Activated naive CD4-positive, alpha-beta T cell treated with anti-CD3 and anti-CD28 coated beads for 36 hours (primary cell): ENCODE measurements at regions of chr3 and their contacts with region 1.

Region 1: GRCh38 chr3:100260685-100261484 is at the start of gene TBC1D23:
- DNase-seq: peak; percentile 98
- H3K4me3 Mint-ChIP-seq: peak within 1 kb of the TSS; percentile 86
- H3K27ac Mint-ChIP-seq: peak within 1 kb of the TSS; percentile 89
- H3K4me1 Mint-ChIP-seq: peaks cover 59% of the 10 kb centered on the region
- H3K27me3 Mint-ChIP-seq: no peaks in the 10 kb centered on the region
- total RNA-seq, gene TBC1D23: 14.1 to 15.8 TPM

Region 2: GRCh38 chr3:99817437-99818240 is 443.2 kb before region 1 on chr3 and contains the start of gene CMSS1:
- CTCF ChIA-PET with region 1: interaction called, 3 read pairs
- intact Hi-C with region 1: loop called (anchors 1 kb)
- DNase-seq: peak; percentile 95
- H3K4me3 Mint-ChIP-seq: peak within 1 kb of the TSS; percentile 98
- H3K27ac Mint-ChIP-seq: peak within 1 kb of the TSS; percentile 98
- H3K4me1 Mint-ChIP-seq: peaks cover 39% of the 10 kb centered on the region
- H3K27me3 Mint-ChIP-seq: no peaks in the 10 kb centered on the region
- total RNA-seq, gene CMSS1: 95.8 to 106 TPM

Region 3: DNA sequence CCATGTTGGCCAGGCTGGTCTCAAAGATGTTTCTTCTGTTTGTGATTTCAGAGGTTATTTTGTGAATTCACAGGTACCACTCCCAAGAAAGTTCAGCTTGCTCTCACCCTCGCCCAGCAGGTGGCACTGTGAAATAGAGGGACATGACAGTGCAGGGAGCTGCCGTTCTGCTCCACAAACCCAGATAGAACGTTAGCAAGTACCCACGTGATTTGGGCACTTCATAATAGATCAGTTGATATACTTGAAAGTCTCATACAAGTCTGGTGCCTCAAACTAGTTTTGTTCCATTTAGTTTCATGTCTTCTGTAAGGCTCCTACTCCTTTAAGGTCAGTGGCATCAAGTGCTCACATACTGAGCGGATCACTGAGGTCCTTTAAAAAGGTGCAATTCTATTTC is 192.1 kb before region 1 on chr3:
- CTCF ChIA-PET with region 1: interaction called, 11 read pairs
- intact Hi-C with region 1: no loop called
- DNase-seq: peak; percentile 90
- H3K4me3 Mint-ChIP-seq: no peak overlapping the region
- H3K27ac Mint-ChIP-seq: no peak overlapping the region
- H3K4me1 Mint-ChIP-seq: peaks cover 30% of the 10 kb centered on the region
- H3K27me3 Mint-ChIP-seq: no peaks in the 10 kb centered on the region

Region 4: DNA sequence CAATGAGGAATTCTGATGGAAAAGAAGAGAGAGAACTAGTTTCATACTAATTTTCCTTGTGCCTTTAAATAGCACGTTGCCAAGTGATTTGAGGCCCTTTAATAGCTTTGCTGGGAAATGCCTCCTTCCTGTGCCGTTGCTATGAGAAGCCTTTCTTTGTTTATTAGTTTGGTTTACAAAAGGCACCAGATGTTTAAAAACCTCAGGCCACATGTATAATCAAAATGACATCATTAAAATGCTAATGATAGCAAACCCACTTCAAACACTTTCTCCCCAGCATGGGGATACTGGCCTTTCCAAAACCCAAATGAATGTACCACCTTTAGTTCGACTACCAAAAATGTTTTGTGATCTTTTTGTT is 50.1 kb before region 1 on chr3:
- CTCF ChIA-PET with region 1: no interaction called
- intact Hi-C with region 1: loop called (anchors 1 kb)
- DNase-seq: peak; percentile 8
- H3K4me3 Mint-ChIP-seq: no peak overlapping the region
- H3K27ac Mint-ChIP-seq: no peak overlapping the region
- H3K4me1 Mint-ChIP-seq: peaks cover 15% of the 10 kb centered on the region
- H3K27me3 Mint-ChIP-seq: peaks cover under 1% of the 10 kb centered on the region

Region 5: GRCh38 chr3:100245927-100246326 is 15.0 kb before region 1 on chr3:
- CTCF ChIA-PET with region 1: no interaction called
- intact Hi-C with region 1: no loop called
- DNase-seq: peak; percentile 26
- H3K4me3 Mint-ChIP-seq: no peak overlapping the region
- H3K27ac Mint-ChIP-seq: no peak overlapping the region
- H3K4me1 Mint-ChIP-seq: peaks cover 11% of the 10 kb centered on the region
- H3K27me3 Mint-ChIP-seq: no peaks in the 10 kb centered on the region

Region 6: DNA sequence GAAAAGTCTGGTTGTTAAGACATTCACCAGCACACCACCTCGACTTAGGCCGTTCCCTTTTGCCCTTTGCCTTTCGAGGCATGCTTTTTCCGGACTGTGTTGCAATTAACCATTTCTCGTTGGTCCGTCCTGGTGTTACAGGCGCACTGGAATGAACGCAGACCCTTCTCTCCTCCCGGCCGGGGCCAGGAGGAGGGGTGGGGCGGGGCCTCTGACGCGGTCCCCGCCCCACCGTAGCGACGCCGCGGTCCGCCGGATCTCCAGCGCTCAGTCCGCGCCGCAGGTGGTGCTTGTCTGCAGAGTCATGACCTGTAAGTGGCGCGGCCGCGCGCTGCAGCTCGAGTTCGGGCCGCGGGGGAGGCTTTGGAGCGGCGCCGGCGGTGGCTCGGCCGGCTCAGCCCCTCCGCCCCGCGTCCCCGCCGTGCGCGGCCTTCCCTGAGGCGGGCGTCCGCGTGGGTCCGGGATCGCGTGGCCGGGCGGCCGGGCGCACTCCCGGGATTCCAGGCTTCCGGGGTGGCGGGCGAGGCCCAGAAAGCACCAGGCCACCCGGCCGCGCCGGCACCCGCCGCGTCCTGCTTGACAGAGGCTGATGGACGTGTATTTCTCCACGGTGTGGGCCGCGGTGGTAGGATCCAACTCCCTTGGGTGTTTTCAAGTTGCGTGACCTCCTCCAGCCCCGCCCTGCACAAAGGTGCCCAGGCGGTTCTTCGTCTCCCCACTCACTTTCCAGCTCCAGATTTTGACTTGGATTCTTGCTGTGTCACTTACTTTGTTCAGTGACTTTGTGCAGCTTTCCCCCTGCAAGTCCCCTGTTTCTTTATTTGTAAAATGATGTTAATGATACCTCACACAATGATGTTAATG is 73.8 kb after region 1 on chr3 and contains the start of gene NIT2:
- CTCF ChIA-PET with region 1: no interaction called
- intact Hi-C with region 1: loop called (anchors 1 kb)
- DNase-seq: peak; percentile 82
- H3K4me3 Mint-ChIP-seq: peak within 1 kb of the TSS; percentile 86
- H3K27ac Mint-ChIP-seq: peak within 1 kb of the TSS; percentile 86
- H3K4me1 Mint-ChIP-seq: peaks cover 26% of the 10 kb centered on the region
- H3K27me3 Mint-ChIP-seq: no peaks in the 10 kb centered on the region
- total RNA-seq, gene NIT2: 69.1 to 76.0 TPM

Region 7: DNA sequence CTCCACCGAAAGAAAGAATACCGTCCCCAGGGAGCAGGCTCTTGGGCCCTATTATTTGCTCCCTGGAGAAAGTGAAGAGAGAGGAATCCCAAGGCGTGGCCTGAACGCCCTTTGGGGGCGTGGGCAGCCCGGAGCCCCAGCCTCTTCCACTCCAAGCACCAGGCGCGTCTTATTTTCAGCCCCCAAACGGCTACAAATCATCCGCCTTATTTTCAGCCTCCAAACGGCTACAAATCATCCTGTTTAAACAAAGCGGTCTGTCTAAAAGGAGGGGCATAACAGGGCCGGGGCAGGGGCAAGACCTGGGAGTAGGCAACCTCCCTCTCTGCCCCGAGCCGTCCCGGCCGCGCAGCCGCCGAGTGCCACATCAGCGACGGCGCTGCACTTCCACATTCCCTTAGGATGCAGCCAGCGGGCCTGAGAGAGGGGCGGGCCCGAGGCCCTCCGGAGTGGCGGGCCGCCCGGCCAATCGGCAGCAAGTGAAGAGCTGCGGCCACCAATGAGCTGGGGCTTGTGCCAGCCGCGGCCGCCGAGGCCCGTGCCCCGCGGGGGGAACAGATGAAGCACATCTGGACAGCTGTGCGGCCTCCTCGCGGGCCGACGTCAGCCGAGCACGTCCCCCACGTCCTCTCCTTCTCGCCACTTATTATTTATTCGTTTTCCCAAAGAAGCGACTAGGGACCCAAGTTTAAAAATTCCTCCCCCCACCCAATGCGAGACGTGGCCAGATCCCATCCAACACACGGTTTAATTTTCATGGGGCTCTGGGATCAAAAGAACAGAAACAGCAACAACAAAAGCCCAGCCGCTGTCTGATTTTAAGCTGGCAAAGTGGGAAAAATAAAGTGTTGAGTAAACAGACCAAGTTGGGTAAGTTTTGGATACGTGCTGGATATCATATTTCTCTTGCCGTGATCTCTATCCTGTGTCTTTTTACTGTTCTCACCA is 231.4 kb after region 1 on chr3 and contains the start of gene TMEM45A:
- CTCF ChIA-PET with region 1: no interaction called
- intact Hi-C with region 1: loop called (anchors 2 kb)
- DNase-seq: peak; percentile 86
- H3K4me3 Mint-ChIP-seq: peak within 1 kb of the TSS; percentile 77
- H3K27ac Mint-ChIP-seq: no peak within 1 kb of the TSS
- H3K4me1 Mint-ChIP-seq: peaks cover 3% of the 10 kb centered on the region
- H3K27me3 Mint-ChIP-seq: peaks cover 6% of the 10 kb centered on the region
- total RNA-seq, gene TMEM45A: 0.21 to 0.22 TPM

Region 8: DNA sequence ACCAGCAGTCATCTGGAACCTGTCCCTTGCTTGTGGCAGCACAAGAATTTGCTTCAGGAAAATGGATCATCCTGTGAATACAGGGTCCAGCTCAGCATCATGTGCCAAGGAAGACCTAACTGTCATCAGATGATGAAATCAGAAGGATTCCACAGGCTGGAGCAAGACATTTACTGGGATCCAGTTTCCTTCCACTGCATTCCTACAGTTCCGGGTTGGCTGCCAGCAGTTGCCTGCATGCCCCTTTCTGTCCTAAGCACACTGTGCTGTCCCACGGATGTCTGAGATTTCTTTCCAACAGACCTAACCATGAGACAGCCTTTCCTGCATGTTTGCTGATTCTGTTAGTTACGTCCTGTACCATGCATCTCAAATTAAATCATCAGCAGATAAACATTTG is 918.8 kb after region 1 on chr3:
- CTCF ChIA-PET with region 1: no interaction called
- intact Hi-C with region 1: no loop called
- DNase-seq: no peak
- H3K4me3 Mint-ChIP-seq: no peak overlapping the region
- H3K27ac Mint-ChIP-seq: no peak overlapping the region
- H3K4me1 Mint-ChIP-seq: no peaks in the 10 kb centered on the region
- H3K27me3 Mint-ChIP-seq: no peaks in the 10 kb centered on the region

Region 9: GRCh38 chr3:101676765-101677435 is 1416.0 kb after region 1 on chr3 and contains the start of gene ZBTB11:
- CTCF ChIA-PET with region 1: no interaction called
- intact Hi-C with region 1: loop called (anchors 2 kb)
- DNase-seq: peak; percentile 100
- H3K4me3 Mint-ChIP-seq: peak within 1 kb of the TSS; percentile 87
- H3K27ac Mint-ChIP-seq: peak within 1 kb of the TSS; percentile 95
- H3K4me1 Mint-ChIP-seq: peaks cover 54% of the 10 kb centered on the region
- H3K27me3 Mint-ChIP-seq: no peaks in the 10 kb centered on the region
- total RNA-seq, gene ZBTB11: 31.2 to 31.7 TPM